HepG2 (cell line): ENCODE measurements at regions of chr6 and their contacts with region 1.

Region 1: DNA sequence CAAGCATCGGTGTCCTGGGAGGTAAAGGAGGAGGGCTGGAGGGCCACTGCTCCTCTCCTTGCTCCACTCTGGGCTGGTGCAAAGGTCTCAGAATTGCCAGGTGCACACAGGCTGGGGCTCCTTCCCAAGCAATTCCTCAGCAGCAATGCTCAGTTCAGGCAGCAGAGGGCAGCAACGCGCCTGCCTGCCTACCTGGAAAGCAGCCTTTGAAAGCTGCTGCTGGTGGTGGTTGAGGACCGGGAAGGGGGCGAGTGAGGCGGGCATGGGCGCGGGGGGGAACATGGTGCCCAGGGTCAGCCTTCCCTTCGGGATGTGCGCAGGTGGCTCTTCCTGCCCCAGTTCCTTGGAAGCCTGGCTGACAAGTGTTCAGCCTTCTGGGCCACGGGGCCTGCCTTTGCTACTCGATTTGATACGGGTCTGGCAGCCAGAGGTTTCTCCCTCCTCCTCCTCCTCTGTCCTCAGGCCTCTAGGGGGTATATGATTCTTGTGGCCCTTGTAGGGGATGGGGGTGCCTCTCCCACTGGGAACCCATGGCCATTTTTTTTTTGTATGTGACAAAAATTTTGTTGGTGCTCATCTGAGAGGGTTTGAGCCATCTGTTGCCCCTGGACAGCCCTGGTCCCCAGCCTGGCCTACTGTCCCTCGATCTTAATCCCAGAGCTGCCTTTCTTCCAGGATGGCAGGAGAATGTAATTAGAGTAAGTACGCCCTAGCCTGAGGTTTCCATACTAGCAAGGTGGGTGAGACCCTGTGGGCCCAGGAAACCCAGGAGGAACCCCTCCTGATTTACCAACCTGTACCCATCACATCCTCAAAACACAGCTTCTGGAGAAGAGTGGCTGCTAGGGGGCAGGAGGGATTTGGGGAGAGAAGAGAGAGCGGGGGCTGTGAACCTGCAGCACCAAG is 20.1 kb downstream of the MRPS18A start:
- DNase-seq: peak; percentile 76
- ATAC-seq: peak; percentile 64
- H3K4me3 ChIP-seq: peak overlapping the region; percentile 16 to 63 (median 44)
- H3K27ac ChIP-seq: no peak overlapping the region
- H3K4me1 ChIP-seq: peaks cover 64% of the 10 kb centered on the region
- H3K27me3 ChIP-seq: peaks cover 2 to 27% of the 10 kb centered on the region in 2 experiments; a peak in 4 of 5 replicates
- CTCF ChIP-seq: peak; percentile 100
- EP300 ChIP-seq: no peak
- POLR2A ChIP-seq: no peak
- RAD21 ChIP-seq: peak; percentile 97

Region 2: DNA sequence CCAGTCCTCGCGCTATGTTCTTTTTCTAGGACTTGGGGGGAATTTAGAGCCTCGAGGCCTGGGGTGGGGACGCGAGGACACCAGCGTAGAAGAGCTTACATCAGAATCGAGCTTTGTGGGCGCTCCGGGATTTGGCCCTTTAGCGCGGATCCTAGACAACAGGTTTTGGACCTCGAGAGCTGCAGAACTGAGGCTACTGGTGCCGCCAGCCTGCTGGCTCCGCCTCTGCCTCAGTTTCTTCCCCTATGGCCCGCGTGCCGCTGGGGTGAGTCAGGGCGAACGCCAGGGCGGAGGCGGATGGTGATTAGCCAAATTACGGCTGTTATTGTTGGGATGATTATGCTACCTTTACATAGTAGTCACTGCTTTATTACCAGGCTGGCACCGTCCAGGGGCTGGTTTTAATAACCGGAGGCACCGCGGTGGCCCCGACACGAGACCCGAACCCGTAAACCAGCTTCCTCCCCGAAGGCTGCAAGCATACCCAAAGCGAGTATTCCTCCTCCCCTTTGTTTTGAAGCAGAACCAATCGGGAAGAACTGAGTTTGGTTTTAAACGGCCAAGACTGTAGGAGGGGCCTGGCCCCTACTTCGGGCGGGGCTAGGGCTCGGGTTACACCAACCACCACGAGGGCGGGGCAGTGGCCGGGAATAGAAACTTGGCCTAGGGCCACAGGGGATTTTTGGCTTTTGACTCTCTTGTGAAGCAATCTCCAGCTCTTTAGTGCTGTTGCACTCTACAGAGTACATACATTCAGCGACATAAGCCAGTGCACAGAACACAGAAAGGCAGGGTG is 37.8 kb before region 1 on chr6:
- CTCF ChIA-PET with region 1: no interaction called
- POLR2A ChIA-PET with region 1: interaction called, 55 read pairs
- in situ Hi-C with region 1: no loop called
- intact Hi-C with region 1: loop called (anchors 2 kb)
- DNase-seq: peak; percentile 98
- ATAC-seq: peak; percentile 86
- H3K4me3 ChIP-seq: peak overlapping the region; percentile 64 to 85 (median 76)
- H3K27ac ChIP-seq: peak overlapping the region; percentile 87
- H3K4me1 ChIP-seq: peaks cover 36% of the 10 kb centered on the region
- H3K27me3 ChIP-seq: no peaks in the 10 kb centered on the region; a peak in 1 of 5 replicates
- CTCF ChIP-seq: no peak; the same call in 1 of the 2 replicates
- EP300 ChIP-seq: 0 out of 4 replicates have a peak, but pooled peaks of 1 of the 2 experiments have one; percentile 16
- POLR2A ChIP-seq: peak; percentile 86 to 93
- RAD21 ChIP-seq: 0 out of 2 replicates have a peak, but pooled peaks have one; percentile 15

Region 3: DNA sequence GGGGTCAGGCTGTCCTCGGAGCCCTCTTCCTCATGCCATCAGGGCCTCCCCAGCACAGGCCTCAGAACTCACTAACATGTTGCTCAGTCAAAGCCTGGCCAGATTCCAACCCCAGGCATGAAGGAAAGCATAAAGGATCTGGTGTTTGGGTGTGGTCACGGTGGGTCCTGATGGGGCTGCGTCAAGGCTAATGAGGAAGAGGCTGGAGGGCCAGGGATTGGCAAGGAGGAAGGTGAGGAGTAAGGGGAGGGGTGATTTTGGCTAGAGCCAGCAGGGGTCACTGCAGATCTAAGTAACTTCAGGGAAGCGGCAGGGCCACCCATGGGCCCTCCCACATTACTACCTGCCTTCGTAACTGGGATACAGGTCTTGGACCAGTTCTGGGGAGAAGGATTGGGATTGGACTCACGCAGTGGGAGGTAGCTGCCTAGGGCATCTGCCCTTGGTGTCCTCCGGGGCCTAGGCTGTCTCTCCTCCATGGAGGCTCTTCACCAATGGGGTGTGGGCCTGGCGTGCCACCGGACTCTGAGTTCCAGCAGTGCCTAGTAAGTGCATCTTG is 56.3 kb after region 1 on chr6:
- CTCF ChIA-PET with region 1: no interaction called
- POLR2A ChIA-PET with region 1: interaction called, 5 read pairs
- in situ Hi-C with region 1: no loop called
- intact Hi-C with region 1: loop called (anchors 2 kb)
- DNase-seq: peak; percentile 84
- ATAC-seq: peak; percentile 91
- H3K4me3 ChIP-seq: no peak overlapping the region; a peak in 1 of 6 replicates
- H3K27ac ChIP-seq: no peak overlapping the region
- H3K4me1 ChIP-seq: peaks cover 50% of the 10 kb centered on the region
- H3K27me3 ChIP-seq: peaks cover 0 to 5% of the 10 kb centered on the region in 2 experiments; a peak in 2 of 5 replicates
- CTCF ChIP-seq: peak; percentile 98
- EP300 ChIP-seq: no peak
- POLR2A ChIP-seq: no peak
- RAD21 ChIP-seq: peak; percentile 95

Region 4: GRCh38 chr6:43798688-43799444 is 131.4 kb after region 1 on chr6:
- CTCF ChIA-PET with region 1: no interaction called
- POLR2A ChIA-PET with region 1: no interaction called
- in situ Hi-C with region 1: no loop called
- intact Hi-C with region 1: loop called (anchors 1 kb)
- DNase-seq: peak; percentile 83
- ATAC-seq: peak; percentile 80
- H3K4me3 ChIP-seq: peak overlapping the region in 1 of 3 experiments; percentile 19; a peak in 1 of 6 replicates
- H3K27ac ChIP-seq: no peak overlapping the region
- H3K4me1 ChIP-seq: peaks cover 84% of the 10 kb centered on the region
- H3K27me3 ChIP-seq: peaks cover 2 to 13% of the 10 kb centered on the region in 2 experiments; a peak in 1 of 5 replicates
- CTCF ChIP-seq: peak; percentile 21; the same call in 1 of the 2 replicates
- EP300 ChIP-seq: peak in 1 of 2 experiments; percentile 67; a peak in 1 of 4 replicates
- POLR2A ChIP-seq: no peak
- RAD21 ChIP-seq: no peak

Region 5: GRCh38 chr6:43951063-43951755 is 283.7 kb after region 1 on chr6:
- CTCF ChIA-PET with region 1: no interaction called
- POLR2A ChIA-PET with region 1: no interaction called
- in situ Hi-C with region 1: no loop called
- intact Hi-C with region 1: loop called (anchors 2 kb)
- DNase-seq: peak; percentile 73
- ATAC-seq: peak; percentile 95
- H3K4me3 ChIP-seq: peak overlapping the region in 1 of 3 experiments; percentile 20; a peak in 1 of 6 replicates
- H3K27ac ChIP-seq: no peak overlapping the region
- H3K4me1 ChIP-seq: peaks cover 71% of the 10 kb centered on the region
- H3K27me3 ChIP-seq: peaks cover 0 to 2% of the 10 kb centered on the region in 2 experiments; a peak in 1 of 5 replicates
- CTCF ChIP-seq: peak; percentile 100
- EP300 ChIP-seq: peak in 1 of 2 experiments; percentile 32; a peak in 1 of 4 replicates
- POLR2A ChIP-seq: no peak
- RAD21 ChIP-seq: peak; percentile 100